ENCODE measurements at regions of chr19 and their contacts with region 1.

Region 1: DNA sequence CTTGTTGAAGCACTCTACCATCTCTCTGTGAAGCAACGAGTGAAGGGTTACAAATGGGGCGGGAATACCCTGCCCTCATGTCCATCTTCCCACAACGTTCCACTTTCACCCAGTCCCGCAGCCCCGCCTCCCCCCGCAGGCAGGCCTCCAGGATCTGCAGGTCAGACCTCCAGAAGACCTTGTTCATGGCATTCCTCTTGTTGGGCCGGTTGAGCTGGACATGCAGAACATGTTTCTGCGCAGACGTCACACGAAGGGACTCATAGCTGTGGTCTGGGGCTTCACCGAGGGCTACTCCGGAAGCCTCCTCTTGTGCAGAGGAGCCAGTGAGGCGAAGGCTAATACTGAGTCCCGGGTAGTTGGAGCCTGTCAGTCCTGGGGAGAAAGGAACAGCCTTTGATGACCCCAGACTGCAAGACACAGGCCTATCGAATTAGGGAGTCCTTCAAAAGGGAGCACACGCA is 420 bp downstream of the ECH1 start:
- DNase-seq: peak; percentile 91 to 96
- H3K4me3 ChIP-seq: peak overlapping the region; percentile 72
- H3K4me3 Mint-ChIP-seq: peak overlapping the region; percentile 71
- H3K27ac Mint-ChIP-seq: peak overlapping the region; percentile 97
- H3K4me1 ChIP-seq: peaks cover 22% of the 10 kb centered on the region
- H3K4me1 Mint-ChIP-seq: peaks cover 13% of the 10 kb centered on the region
- H3K27me3 ChIP-seq: no peaks in the 10 kb centered on the region
- H3K27me3 Mint-ChIP-seq: no peaks in the 10 kb centered on the region
- CTCF ChIP-seq: no peak

Region 2: GRCh38 chr19:38799071-38799744 is 32.0 kb before region 1 on chr19:
- CTCF ChIA-PET with region 1: no interaction called
- POLR2A ChIA-PET with region 1: no interaction called
- intact Hi-C with region 1: loop called (anchors 1 kb)
- DNase-seq: no peak
- H3K4me3 ChIP-seq: no peak overlapping the region
- H3K4me3 Mint-ChIP-seq: no peak overlapping the region
- H3K27ac Mint-ChIP-seq: no peak overlapping the region
- H3K4me1 ChIP-seq: no peaks in the 10 kb centered on the region
- H3K4me1 Mint-ChIP-seq: no peaks in the 10 kb centered on the region
- H3K27me3 ChIP-seq: no peaks in the 10 kb centered on the region
- H3K27me3 Mint-ChIP-seq: no peaks in the 10 kb centered on the region
- CTCF ChIP-seq: no peak

Region 3: GRCh38 chr19:38899447-38900219 is 68.5 kb after region 1 on chr19 and contains the starts of genes NFKBIB and SIRT2:
- CTCF ChIA-PET with region 1: no interaction called
- POLR2A ChIA-PET with region 1: interaction called, 12 read pairs
- intact Hi-C with region 1: no loop called
- DNase-seq: peak; percentile 99 to 100
- H3K4me3 ChIP-seq: peak within 1 kb of the TSS; percentile 82
- H3K4me3 Mint-ChIP-seq: peak within 1 kb of the TSS; percentile 75
- H3K27ac Mint-ChIP-seq: peak within 1 kb of the TSS; percentile 69
- H3K4me1 ChIP-seq: peaks cover 18% of the 10 kb centered on the region
- H3K4me1 Mint-ChIP-seq: peaks cover 24% of the 10 kb centered on the region
- H3K27me3 ChIP-seq: no peaks in the 10 kb centered on the region
- H3K27me3 Mint-ChIP-seq: no peaks in the 10 kb centered on the region
- CTCF ChIP-seq: no peak
- total RNA-seq, gene NFKBIB: 43.9 and 52.6 TPM in 2 replicates
- total RNA-seq, gene SIRT2: 33.3 and 34.4 TPM in 2 replicates